ENCODE measurements at regions of chr7 and their contacts with region 1.

Region 1: DNA sequence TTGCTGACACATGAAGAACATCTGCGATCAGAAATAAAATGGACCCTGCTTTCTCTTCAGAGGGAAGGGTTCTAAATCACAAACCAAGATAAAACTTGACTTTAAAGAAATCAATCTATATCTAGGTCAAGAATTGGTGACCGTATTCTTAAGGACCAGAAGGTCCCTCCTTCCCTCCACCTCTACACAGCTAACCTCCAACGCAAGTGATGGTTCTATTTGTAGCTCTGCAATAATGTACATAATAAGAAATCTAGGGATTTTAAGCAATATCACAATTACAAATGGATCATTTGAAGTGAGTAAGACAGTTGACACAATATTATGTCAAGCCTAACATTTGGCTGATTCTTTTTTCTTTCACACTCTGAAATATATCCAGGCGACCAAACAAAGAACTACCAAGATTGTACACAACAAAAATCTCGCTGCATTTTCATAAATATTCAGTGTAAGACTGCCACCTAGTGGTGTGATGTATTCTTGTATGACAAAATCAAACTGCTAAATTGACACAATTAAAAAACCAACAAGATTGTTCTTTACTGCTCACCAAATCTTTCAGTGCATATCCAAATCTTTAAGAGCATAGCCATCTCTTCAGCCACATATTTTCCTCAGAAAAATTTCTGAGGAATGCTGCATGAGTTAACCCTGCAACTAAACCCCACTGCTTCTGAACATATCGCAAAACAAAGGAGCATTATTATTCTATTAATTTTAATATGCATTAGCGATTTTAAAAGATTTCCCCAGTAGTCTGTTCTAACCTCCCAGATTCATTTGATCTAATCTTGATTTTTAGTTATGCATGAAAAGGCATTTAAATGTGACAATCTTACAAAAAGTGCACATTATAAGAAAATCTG is 44.5 kb downstream of the ICA1 start:
- DNase-seq: no peak
- ATAC-seq: peak; percentile 60 to 63
- H3K4me3 ChIP-seq: no peak overlapping the region
- H3K27ac ChIP-seq: no peak overlapping the region
- H3K4me1 ChIP-seq: peaks cover 0 to 8% of the 10 kb centered on the region in 2 donors
- H3K27me3 ChIP-seq: no peaks in the 10 kb centered on the region
- CTCF ChIP-seq: peak; percentile 65 to 80 (median 72)
- POLR2A ChIP-seq: no peak

Region 2: DNA sequence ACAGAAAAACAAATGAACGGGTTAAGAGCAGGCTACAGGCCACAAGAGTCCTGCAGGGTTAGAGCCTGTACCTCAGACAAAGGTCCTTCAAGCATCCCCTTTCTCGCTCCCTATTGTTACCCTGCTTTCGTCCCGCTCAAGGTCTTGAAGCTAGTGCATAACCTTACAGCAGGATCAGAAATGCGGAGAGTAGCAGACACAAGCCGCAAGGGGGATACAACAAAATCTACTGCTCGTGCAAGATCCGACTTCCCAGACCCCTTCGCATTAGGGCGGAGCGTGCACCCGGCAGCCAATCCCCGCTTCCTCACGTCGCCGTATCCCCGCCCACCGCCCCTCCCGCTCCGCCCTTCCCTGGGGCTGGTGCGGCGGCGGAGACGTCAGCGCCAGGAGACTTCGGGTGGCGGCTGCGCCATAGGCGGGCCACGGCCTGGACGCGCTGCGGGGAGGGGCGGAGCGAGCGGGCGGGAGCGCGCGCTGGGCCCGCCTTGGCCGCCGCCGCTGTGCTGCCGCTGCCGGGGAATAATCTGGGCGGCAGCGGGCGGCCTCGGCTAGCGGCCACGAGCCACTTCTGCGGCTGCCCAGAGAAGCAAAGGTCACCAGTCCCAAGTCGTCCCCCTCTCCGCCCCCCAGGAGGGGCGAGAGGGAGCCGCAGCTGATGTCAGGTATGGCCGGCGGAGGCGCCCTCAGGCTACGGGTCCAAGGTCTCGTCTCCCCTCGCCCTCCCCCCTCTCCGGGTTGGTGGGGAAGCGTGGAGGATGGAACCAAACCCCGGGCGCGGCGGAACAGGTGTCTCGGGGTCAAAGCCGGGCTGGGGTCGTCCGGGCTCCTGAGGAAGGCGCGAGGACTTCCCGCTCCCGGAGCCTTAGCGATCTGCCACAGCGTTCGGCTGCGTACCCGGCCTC is 1035.0 kb before region 1 on chr7 and contains the start of gene C1GALT1:
- in situ Hi-C with region 1: no loop called
- intact Hi-C with region 1: loop called (anchors 5 kb)
- DNase-seq: peak; percentile 95
- ATAC-seq: peak; percentile 90 to 92
- H3K4me3 ChIP-seq: peak within 1 kb of the TSS; percentile 80 to 98 (median 88)
- H3K27ac ChIP-seq: peak within 1 kb of the TSS; percentile 94 to 99 (median 97)
- H3K4me1 ChIP-seq: peaks cover 24 to 29% of the 10 kb centered on the region in 2 donors
- H3K27me3 ChIP-seq: no peaks in the 10 kb centered on the region
- CTCF ChIP-seq: peak in 3 of 5 experiments; percentile 12 to 48 (median 25)
- POLR2A ChIP-seq: peak; percentile 82 to 90
- total RNA-seq, gene C1GALT1: 16.1 to 40.8 (median 27.5) TPM

Region 3: GRCh38 chr7:7566651-7567611 is 650.5 kb before region 1 on chr7 and contains the start of gene MIOS:
- in situ Hi-C with region 1: no loop called
- intact Hi-C with region 1: loop called (anchors 10 kb)
- DNase-seq: peak; percentile 89 to 90
- ATAC-seq: peak; percentile 66 to 67
- H3K4me3 ChIP-seq: peak within 1 kb of the TSS; percentile 67 to 85 (median 80)
- H3K27ac ChIP-seq: peak within 1 kb of the TSS; percentile 90 to 98 (median 96)
- H3K4me1 ChIP-seq: peaks cover 33 to 76% of the 10 kb centered on the region in 2 donors
- H3K27me3 ChIP-seq: no peaks in the 10 kb centered on the region
- CTCF ChIP-seq: peak in 1 of 5 experiments; percentile 18
- POLR2A ChIP-seq: peak; percentile 82 to 92
- total RNA-seq, gene MIOS: 68.4 to 336 (median 280) TPM

Region 4: DNA sequence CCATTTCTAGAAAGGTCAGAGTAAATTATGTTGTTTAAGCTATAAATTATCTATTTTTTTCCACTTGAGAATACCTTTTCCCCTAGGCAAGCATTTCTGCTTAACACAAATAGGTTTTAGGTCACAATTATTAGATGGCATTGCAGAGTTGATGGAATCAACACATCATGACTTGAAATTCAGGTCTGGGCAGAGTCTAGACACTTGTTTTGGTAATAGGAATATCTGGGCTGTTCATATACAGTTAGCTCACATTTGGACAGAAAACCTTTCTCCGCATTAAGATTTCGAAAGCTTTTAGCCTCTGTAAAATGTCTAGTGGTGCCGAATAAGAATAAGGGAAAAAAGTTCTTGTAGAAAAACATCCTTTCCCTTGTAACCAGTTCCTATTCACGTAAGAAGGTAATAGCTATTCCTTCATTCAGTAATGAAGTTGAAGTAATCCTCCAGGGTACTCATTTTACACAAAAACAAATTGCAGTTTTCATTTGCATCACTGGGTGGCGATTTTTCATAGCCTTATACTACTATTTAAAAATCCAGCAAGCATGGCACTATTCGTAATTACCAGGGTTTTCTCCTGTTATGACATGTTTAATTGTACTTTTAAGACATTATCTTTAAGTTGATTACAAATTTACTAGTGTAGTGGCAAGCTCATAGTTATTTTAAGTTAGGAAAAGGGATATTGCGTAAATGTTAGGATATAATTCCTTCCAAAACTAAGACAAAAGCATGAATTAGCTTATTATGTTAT is 536.1 kb before region 1 on chr7:
- in situ Hi-C with region 1: loop called in 1 of 4 experiments (anchors 10 kb)
- intact Hi-C with region 1: loop called (anchors 1 kb)
- DNase-seq: peak; percentile 14 to 23
- ATAC-seq: peak; percentile 98 to 99
- H3K4me3 ChIP-seq: peak overlapping the region; percentile 7 to 33 (median 12)
- H3K27ac ChIP-seq: peak overlapping the region; percentile 67 to 85 (median 73)
- H3K4me1 ChIP-seq: peaks cover 22 to 25% of the 10 kb centered on the region in 2 donors
- H3K27me3 ChIP-seq: no peaks in the 10 kb centered on the region
- CTCF ChIP-seq: peak; percentile 48 to 70 (median 56)
- POLR2A ChIP-seq: no peak

Region 5: DNA sequence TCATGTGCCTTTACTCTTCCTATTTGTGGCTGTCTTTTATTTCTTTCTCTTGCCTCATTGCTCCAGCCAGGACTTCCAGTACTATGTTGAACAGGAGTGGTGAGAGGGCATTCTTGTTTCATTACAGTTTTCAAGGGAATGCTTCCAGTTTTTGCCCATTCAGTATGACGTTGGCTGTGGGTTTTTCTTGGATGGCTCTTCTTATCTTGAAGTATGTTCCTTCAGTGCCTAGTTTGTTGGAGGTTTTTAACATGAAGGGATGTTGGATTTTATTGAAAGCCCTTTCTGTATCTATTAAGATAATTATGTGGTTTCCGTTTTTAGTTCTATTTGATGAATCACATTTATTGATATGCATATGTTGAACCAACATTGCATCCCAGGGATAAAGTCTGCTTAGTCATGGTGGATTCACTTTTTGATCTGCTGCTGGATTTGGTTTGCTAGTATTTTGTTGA is 152.0 kb before region 1 on chr7:
- in situ Hi-C with region 1: no loop called
- intact Hi-C with region 1: loop called (anchors 10 kb)
- DNase-seq: no peak
- ATAC-seq: no peak
- H3K4me3 ChIP-seq: no peak overlapping the region
- H3K27ac ChIP-seq: no peak overlapping the region
- H3K4me1 ChIP-seq: peaks cover 12 to 23% of the 10 kb centered on the region in 2 donors
- H3K27me3 ChIP-seq: no peaks in the 10 kb centered on the region
- CTCF ChIP-seq: no peak
- POLR2A ChIP-seq: no peak

Region 6: GRCh38 chr7:8343556-8343955 is 126.1 kb after region 1 on chr7:
- in situ Hi-C with region 1: no loop called
- intact Hi-C with region 1: no loop called
- DNase-seq: no peak
- ATAC-seq: no peak
- H3K4me3 ChIP-seq: no peak overlapping the region
- H3K27ac ChIP-seq: no peak overlapping the region
- H3K4me1 ChIP-seq: no peaks in the 10 kb centered on the region
- H3K27me3 ChIP-seq: no peaks in the 10 kb centered on the region
- CTCF ChIP-seq: no peak
- POLR2A ChIP-seq: no peak